PC-3 (cell line): ENCODE measurements at regions of chr12 and their contacts with region 1.

Region 1: DNA sequence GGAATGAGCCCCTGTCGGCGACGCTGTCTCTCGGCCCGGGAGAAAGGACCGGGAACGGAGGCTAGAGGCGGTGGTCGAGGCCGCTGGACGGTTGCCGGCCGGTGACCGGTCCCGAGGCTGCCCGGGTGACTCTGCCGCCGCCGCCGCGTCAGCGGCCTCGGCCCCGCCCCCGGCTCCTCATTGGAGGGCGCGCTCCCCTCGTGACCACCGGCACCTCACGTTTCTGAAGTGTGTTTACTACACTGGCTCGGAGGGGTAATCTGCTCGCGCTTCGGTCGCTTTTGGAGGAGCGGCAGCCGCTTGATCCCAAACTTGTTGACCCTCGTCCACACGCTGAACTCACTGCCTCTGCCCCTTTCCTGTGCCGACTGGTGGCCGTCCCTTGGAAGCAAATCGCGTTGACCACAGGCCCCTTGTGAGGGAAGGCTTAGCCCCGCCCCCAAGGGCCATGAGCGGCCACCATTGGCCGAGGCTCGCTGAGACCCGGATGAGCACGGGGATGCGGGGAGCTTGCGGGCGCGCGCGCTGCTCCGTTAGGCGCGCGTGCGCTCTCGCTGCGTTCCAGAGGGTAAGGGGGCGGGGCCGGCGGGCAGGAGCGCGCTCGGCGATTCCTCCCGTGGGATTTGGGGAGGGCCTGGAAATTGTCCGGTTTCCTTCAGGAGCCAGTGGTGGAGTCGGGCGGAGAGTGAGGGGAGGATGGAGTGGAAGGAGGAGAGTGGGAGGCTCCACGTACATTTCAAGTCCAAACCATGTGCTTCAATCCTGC is at the start of gene CRY1:
- DNase-seq: peak; percentile 98
- ATAC-seq: peak; percentile 75
- H3K4me3 ChIP-seq: peak within 1 kb of the TSS; percentile 72
- H3K27ac ChIP-seq: peak within 1 kb of the TSS; percentile 63
- H3K4me1 ChIP-seq: peaks cover 24% of the 10 kb centered on the region
- H3K27me3 ChIP-seq: no peaks in the 10 kb centered on the region
- CTCF ChIP-seq: no peak
- total RNA-seq, gene CRY1: 32.0 and 32.4 TPM in 2 replicates

Region 2: DNA sequence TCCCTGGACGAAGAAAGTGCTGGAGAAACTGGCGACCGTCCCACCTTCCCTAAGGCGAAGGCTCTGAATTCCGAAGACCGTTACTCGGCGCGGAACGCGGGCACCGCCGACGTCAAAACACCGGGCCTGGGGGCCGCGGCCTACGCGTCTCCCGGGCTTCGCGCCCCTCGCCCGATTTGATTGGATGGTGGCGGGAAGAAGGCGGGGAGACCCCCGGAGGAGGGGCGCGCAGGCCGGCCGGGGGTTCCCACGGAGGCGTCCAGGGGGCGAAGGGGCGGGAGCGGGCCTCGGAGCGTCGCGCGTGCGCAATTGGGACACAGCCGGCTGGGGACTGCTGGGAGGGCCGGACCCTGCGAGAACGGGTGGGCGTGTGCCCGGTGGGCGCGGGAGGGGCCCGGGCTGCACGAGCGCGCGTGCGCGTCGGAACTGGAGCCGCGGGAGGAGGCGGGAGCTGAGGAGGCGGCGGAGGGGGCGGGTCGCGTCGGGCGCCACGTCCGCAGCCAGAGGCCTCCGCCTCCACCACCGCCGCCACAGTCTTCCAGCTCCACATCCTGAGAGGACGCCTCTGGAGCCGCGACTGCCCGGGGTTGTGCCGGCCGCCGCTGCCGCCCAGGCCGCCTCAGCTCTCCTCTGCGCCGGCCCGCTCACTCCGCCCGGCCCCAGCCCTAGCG is 138.1 kb before region 1 on chr12 and contains the start of gene TMEM263:
- CTCF ChIA-PET with region 1: no interaction called
- POLR2A ChIA-PET with region 1: interaction called, 10 read pairs
- intact Hi-C with region 1: loop called (anchors 1 kb)
- DNase-seq: peak; percentile 94
- ATAC-seq: peak; percentile 77
- H3K4me3 ChIP-seq: peak within 1 kb of the TSS; percentile 80
- H3K27ac ChIP-seq: peak within 1 kb of the TSS; percentile 32
- H3K4me1 ChIP-seq: peaks cover 20% of the 10 kb centered on the region
- H3K27me3 ChIP-seq: no peaks in the 10 kb centered on the region
- CTCF ChIP-seq: 0 out of 2 replicates have a peak, but pooled peaks have one; percentile 23
- total RNA-seq, gene TMEM263: 42.7 and 59.7 TPM in 2 replicates

Region 3: GRCh38 chr12:107027636-107028053 is 66.0 kb before region 1 on chr12:
- CTCF ChIA-PET with region 1: interaction called, 3 read pairs
- POLR2A ChIA-PET with region 1: no interaction called
- intact Hi-C with region 1: loop called (anchors 1 kb)
- DNase-seq: peak; percentile 98
- ATAC-seq: peak; percentile 97
- H3K4me3 ChIP-seq: no peak overlapping the region
- H3K27ac ChIP-seq: peak overlapping the region; percentile 52
- H3K4me1 ChIP-seq: peaks cover 29% of the 10 kb centered on the region
- H3K27me3 ChIP-seq: no peaks in the 10 kb centered on the region
- CTCF ChIP-seq: no peak

Region 4: DNA sequence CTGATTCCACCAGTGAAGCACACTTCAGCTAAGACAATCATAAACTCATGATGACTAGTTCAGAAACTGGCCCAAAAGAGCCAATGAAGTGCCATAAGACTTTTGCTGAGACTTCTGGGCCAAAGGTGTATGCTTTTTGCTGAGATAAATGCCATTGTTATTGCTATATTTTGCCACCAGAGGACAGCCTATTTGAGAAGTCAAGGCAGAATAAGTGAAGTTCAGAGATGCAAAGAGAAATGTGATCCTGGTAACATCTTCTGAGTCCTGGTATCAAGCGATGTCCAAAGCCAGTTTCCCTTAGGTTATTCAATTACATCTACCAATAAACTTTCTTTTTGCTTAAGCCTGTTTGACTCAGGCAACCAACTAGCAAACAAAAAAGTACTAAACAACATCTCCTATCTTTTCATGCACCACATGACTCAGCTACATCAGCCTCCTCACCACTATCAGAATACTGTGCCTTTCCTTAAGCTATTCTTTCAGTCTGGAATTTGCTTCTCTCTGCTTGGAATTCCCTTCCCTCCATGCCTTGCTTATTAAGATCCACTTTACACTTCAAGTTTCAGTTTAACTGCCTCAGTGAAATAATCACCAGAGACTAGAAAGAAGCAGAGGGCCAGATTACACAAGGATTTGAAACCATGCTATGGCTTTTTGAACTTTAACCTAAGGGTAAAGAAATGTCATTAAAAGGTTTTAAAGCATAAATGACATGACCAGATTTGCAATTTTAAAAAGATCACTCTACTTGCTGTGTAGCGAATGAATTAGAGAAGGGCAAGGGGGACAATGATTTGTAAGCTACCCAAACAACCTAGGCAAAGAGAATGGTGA is 14.2 kb before region 1 on chr12:
- CTCF ChIA-PET with region 1: interaction called, 3 read pairs
- POLR2A ChIA-PET with region 1: no interaction called
- intact Hi-C with region 1: loop called (anchors 1 kb)
- DNase-seq: peak; percentile 84
- ATAC-seq: peak; percentile 82
- H3K4me3 ChIP-seq: no peak overlapping the region
- H3K27ac ChIP-seq: no peak overlapping the region
- H3K4me1 ChIP-seq: peaks cover 12% of the 10 kb centered on the region
- H3K27me3 ChIP-seq: no peaks in the 10 kb centered on the region
- CTCF ChIP-seq: peak; percentile 83

Region 5: DNA sequence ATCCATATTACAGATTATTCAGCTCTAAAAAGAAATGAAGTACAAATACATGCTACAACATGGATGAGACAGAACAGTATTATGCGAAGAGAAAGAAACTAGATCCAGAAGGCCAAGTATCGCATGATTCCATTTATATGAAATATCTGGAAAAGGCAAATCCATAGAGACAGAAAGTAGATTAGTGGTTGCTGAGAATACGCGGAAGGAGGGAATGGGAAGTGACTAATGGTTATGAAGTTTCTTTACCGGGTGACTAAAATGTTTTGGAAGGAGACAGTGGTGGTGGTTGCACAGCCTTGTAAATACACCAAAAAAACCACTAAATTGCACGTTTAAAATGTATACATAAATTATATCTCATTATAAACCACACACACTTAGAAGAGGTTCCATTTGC is 654.9 kb after region 1 on chr12:
- CTCF ChIA-PET with region 1: no interaction called
- POLR2A ChIA-PET with region 1: no interaction called
- intact Hi-C with region 1: loop called (anchors 5 kb)
- DNase-seq: peak; percentile 91
- ATAC-seq: peak; percentile 80
- H3K4me3 ChIP-seq: peak overlapping the region; percentile 46
- H3K27ac ChIP-seq: peak overlapping the region; percentile 76
- H3K4me1 ChIP-seq: peaks cover 56% of the 10 kb centered on the region
- H3K27me3 ChIP-seq: no peaks in the 10 kb centered on the region
- CTCF ChIP-seq: no peak